Mammary epithelial cell (primary cell): ENCODE measurements at regions of chr16 and their contacts with region 1.

Region 1: DNA sequence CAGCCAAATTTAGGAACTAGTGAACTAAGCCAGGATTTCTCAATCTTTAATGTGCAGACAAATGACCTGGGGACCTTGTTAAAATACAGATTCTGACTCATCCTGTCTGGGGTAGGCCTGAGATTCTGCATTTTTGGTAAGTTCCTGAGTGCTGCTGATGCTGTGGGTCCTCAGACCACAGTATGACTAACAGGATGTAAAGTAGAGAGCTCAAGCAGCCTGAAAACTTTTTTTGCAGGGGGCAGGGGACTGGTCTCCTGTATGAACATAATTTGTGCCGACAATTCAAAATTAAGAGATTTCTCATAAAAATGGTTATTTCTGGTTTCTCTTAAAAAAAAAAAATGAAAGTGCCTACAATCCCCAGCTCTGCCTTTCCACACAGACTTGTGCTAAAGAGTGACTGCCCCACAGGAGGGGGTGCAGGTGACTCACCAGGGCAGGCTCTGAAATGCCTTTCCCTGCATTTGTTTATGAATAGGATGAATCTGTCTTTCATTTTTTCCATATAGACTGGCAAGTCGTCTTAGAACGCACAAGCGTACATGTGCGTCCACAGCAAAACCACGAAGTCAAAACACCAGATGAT is 271.5 kb downstream of the PHKB start:
- DNase-seq: peak; percentile 96
- H3K4me3 ChIP-seq: no peak overlapping the region
- H3K27ac ChIP-seq: peak overlapping the region; percentile 63
- H3K4me1 ChIP-seq: peaks cover 45% of the 10 kb centered on the region
- H3K27me3 ChIP-seq: no peaks in the 10 kb centered on the region
- CTCF ChIP-seq: no peak

Region 2: DNA sequence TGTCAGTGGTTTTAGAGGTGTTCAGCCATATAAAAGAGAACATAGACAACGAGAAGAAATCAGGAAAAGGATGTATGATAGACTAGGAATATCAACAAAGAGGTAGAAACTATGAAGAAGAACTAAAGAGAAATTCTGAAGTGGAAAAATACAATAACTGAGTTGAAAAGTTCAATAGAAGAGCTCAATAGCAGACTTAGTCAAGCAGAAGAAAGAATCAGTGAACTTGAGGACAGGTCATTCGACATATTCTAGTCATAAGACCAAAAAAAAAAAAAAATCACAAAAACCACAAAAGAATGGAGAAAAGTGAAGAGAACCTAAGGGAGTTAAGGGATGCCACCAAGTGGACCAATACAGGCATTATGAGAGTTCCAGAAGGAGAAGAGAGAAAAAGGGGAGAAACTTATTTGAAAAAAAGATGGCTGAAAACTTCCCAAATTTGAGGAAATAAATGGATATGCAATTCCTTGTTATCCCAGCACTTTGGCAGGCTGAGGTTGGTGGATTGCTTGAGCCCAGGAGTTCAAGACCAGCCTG is 101.9 kb after region 1 on chr16:
- CTCF ChIA-PET with region 1: interaction called, 11 read pairs
- dilution Hi-C with region 1: no loop called
- in situ Hi-C with region 1: no loop called
- intact Hi-C with region 1: no loop called
- DNase-seq: no peak
- H3K4me3 ChIP-seq: no peak overlapping the region
- H3K27ac ChIP-seq: no peak overlapping the region
- H3K4me1 ChIP-seq: no peaks in the 10 kb centered on the region
- H3K27me3 ChIP-seq: no peaks in the 10 kb centered on the region
- CTCF ChIP-seq: no peak

Region 3: GRCh38 chr16:48123104-48123788 is 390.6 kb after region 1 on chr16:
- CTCF ChIA-PET with region 1: no interaction called
- dilution Hi-C with region 1: no loop called
- in situ Hi-C with region 1: no loop called
- intact Hi-C with region 1: loop called (anchors 5 kb)
- DNase-seq: peak; percentile 99
- H3K4me3 ChIP-seq: no peak overlapping the region
- H3K27ac ChIP-seq: peak overlapping the region; percentile 23
- H3K4me1 ChIP-seq: peaks cover 33% of the 10 kb centered on the region
- H3K27me3 ChIP-seq: no peaks in the 10 kb centered on the region
- CTCF ChIP-seq: no peak